ENCODE measurements at regions of chr1 and their contacts with region 1.

Region 1: GRCh38 chr1:58783993-58784757 is at the start of gene JUN:
- DNase-seq: peak; percentile 100
- ATAC-seq: peak; percentile 71
- H3K4me3 ChIP-seq: peak within 1 kb of the TSS; percentile 65 to 99 (median 98)
- H3K4me3 Mint-ChIP-seq: peak within 1 kb of the TSS; percentile 90
- H3K27ac ChIP-seq: peak within 1 kb of the TSS; percentile 100
- H3K27ac Mint-ChIP-seq: peak within 1 kb of the TSS; percentile 97
- H3K4me1 ChIP-seq: peaks cover 16 to 27% of the 10 kb centered on the region in 2 donors
- H3K4me1 Mint-ChIP-seq: peaks cover 39% of the 10 kb centered on the region
- H3K27me3 ChIP-seq: no peaks in the 10 kb centered on the region
- H3K27me3 Mint-ChIP-seq: no peaks in the 10 kb centered on the region
- CTCF ChIP-seq: no peak
- total RNA-seq, gene JUN: 94.4 and 95.3 TPM in 2 replicates

Region 2: GRCh38 chr1:58611861-58612385 is 172.3 kb before region 1 on chr1:
- CTCF ChIA-PET with region 1: no interaction called
- POLR2A ChIA-PET with region 1: no interaction called
- intact Hi-C with region 1: no loop called
- DNase-seq: no peak
- ATAC-seq: no peak
- H3K4me3 ChIP-seq: no peak overlapping the region
- H3K4me3 Mint-ChIP-seq: no peak overlapping the region
- H3K27ac ChIP-seq: no peak overlapping the region
- H3K27ac Mint-ChIP-seq: no peak overlapping the region
- H3K4me1 ChIP-seq: no peaks in the 10 kb centered on the region
- H3K4me1 Mint-ChIP-seq: no peaks in the 10 kb centered on the region
- H3K27me3 ChIP-seq: peaks cover 0 to 5% (median 0%) of the 10 kb centered on the region in 4 experiments
- H3K27me3 Mint-ChIP-seq: peaks cover 35% of the 10 kb centered on the region
- CTCF ChIP-seq: no peak

Region 3: GRCh38 chr1:58773406-58773840 is 10.8 kb before region 1 on chr1:
- CTCF ChIA-PET with region 1: interaction called, 18 read pairs
- POLR2A ChIA-PET with region 1: interaction called, 26 read pairs
- intact Hi-C with region 1: no loop called
- DNase-seq: peak; percentile 45
- ATAC-seq: peak; percentile 83
- H3K4me3 ChIP-seq: no peak overlapping the region
- H3K4me3 Mint-ChIP-seq: peak overlapping the region; percentile 30
- H3K27ac ChIP-seq: peak overlapping the region; percentile 26 to 32
- H3K27ac Mint-ChIP-seq: peak overlapping the region; percentile 69
- H3K4me1 ChIP-seq: peaks cover 18 to 20% of the 10 kb centered on the region in 2 donors
- H3K4me1 Mint-ChIP-seq: peaks cover 23% of the 10 kb centered on the region
- H3K27me3 ChIP-seq: peaks cover 0 to 5% (median 0%) of the 10 kb centered on the region in 4 experiments
- H3K27me3 Mint-ChIP-seq: peaks cover 8% of the 10 kb centered on the region
- CTCF ChIP-seq: no peak

Region 4: GRCh38 chr1:58841455-58841854 is 57.3 kb after region 1 on chr1:
- CTCF ChIA-PET with region 1: interaction called, 4 read pairs
- POLR2A ChIA-PET with region 1: no interaction called
- intact Hi-C with region 1: loop called (anchors 1 kb)
- DNase-seq: peak; percentile 44
- ATAC-seq: peak; percentile 51
- H3K4me3 ChIP-seq: no peak overlapping the region
- H3K4me3 Mint-ChIP-seq: no peak overlapping the region
- H3K27ac ChIP-seq: no peak overlapping the region
- H3K27ac Mint-ChIP-seq: no peak overlapping the region
- H3K4me1 ChIP-seq: no peaks in the 10 kb centered on the region
- H3K4me1 Mint-ChIP-seq: peaks cover 2% of the 10 kb centered on the region
- H3K27me3 ChIP-seq: no peaks in the 10 kb centered on the region
- H3K27me3 Mint-ChIP-seq: no peaks in the 10 kb centered on the region
- CTCF ChIP-seq: peak; percentile 27

Region 5: DNA sequence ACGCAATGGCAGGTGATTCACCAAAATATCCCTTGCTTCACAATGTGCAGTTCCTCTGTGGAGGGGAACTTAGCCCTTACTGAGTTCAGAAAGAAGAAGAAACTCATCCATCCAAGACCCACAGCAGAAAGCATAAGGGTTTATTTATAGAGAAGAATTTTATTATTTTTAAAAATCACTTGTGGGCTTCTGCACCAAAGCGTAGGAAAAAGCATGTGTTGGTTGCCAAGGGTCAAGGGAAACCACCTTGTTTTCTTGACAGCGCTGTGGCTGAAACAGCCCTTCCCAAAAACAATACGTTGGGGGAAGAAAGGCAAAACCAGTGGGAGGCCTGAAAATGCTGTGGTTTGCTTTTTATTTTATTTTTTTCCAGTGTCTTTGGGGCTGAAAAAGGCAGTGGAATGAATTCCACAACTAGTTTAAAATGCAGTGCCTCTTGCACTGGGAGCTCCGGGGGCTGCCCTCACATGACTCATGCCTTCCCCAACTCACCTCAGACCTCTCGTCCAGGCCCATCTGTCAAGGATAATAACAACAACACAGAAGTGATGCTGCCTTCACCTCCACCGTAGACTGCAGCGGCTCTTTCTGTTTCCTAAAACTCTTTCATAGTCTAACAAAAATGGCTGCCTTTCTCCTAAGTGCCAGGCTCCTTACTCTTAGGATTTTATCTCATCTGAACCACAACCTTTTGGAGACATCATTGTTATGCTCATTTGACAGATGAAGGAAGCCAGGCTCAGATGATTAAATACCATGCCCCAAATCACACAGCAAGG is 223.8 kb after region 1 on chr1:
- CTCF ChIA-PET with region 1: interaction called, 8 read pairs
- POLR2A ChIA-PET with region 1: interaction called, 5 read pairs
- intact Hi-C with region 1: loop called (anchors 1 kb)
- DNase-seq: peak; percentile 57
- ATAC-seq: peak; percentile 68
- H3K4me3 ChIP-seq: peak overlapping the region in 3 of 5 experiments; percentile 0 to 44 (median 6)
- H3K4me3 Mint-ChIP-seq: peak overlapping the region; percentile 55
- H3K27ac ChIP-seq: peak overlapping the region; percentile 70 to 85
- H3K27ac Mint-ChIP-seq: peak overlapping the region; percentile 90
- H3K4me1 ChIP-seq: peaks cover 62 to 70% of the 10 kb centered on the region in 2 donors
- H3K4me1 Mint-ChIP-seq: peaks cover 80% of the 10 kb centered on the region
- H3K27me3 ChIP-seq: no peaks in the 10 kb centered on the region
- H3K27me3 Mint-ChIP-seq: no peaks in the 10 kb centered on the region
- CTCF ChIP-seq: no peak

Region 6: GRCh38 chr1:59146651-59147358 is 362.6 kb after region 1 on chr1:
- CTCF ChIA-PET with region 1: interaction called, 6 read pairs
- POLR2A ChIA-PET with region 1: no interaction called
- intact Hi-C with region 1: loop called (anchors 2 kb)
- DNase-seq: peak; percentile 78
- ATAC-seq: peak; percentile 85
- H3K4me3 ChIP-seq: peak overlapping the region; percentile 31 to 69 (median 58)
- H3K4me3 Mint-ChIP-seq: peak overlapping the region; percentile 94
- H3K27ac ChIP-seq: peak overlapping the region; percentile 49 to 72
- H3K27ac Mint-ChIP-seq: peak overlapping the region; percentile 88
- H3K4me1 ChIP-seq: peaks cover 16 to 28% of the 10 kb centered on the region in 2 donors
- H3K4me1 Mint-ChIP-seq: peaks cover 32% of the 10 kb centered on the region
- H3K27me3 ChIP-seq: no peaks in the 10 kb centered on the region
- H3K27me3 Mint-ChIP-seq: no peaks in the 10 kb centered on the region
- CTCF ChIP-seq: peak; percentile 45

Region 7: DNA sequence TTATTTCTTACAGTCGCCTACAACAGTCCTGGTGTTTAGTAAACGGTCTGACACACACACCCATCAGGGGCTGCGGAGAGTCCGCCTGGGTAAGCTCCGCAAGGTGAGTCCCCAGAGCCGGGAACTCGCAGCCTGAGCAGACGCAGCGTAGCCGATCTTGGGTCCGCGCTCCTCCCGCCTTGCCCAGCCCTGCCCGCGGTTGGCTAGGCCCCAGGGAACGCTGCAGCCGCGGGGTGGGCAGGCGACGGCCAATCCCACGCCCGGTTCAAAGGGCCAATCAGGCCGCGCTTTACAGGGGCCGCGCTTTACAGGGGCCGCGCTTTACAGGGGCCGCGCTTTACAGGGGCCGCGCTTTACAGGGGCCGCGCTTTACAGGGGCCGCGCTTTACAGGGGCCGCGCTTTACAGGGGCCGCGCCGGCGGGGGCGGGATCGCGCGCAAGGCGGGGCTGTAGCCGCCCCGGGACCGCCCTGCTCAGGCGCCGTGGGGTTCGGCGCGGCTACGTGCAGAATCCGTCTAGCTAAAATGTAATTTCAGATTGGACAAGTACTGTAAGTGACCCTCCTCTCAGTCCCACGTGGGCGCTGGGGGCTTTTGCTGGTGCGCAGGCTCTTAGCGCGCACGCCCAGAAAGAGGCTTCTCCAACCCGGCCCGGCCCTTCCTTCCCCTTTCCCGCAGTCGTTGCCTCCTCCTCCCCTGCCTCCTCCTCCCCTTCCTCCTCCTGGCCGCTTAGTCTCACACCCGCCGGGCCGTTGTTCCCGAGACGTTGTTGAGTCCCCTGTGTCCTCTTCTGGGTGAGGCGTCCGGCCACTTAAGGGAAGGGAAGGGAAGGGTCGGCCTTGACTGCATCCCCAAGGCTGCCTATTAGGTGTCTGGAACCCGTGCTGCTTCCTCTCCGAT is 512.4 kb after region 1 on chr1 and contains the start of gene FGGY:
- CTCF ChIA-PET with region 1: interaction called, 6 read pairs
- POLR2A ChIA-PET with region 1: interaction called, 25 read pairs
- intact Hi-C with region 1: loop called (anchors 1 kb)
- DNase-seq: peak; percentile 97
- ATAC-seq: peak; percentile 89
- H3K4me3 ChIP-seq: peak within 1 kb of the TSS; percentile 63 to 92 (median 87)
- H3K4me3 Mint-ChIP-seq: peak within 1 kb of the TSS; percentile 91
- H3K27ac ChIP-seq: peak within 1 kb of the TSS; percentile 96 to 98
- H3K27ac Mint-ChIP-seq: peak within 1 kb of the TSS; percentile 98
- H3K4me1 ChIP-seq: peaks cover 22 to 25% of the 10 kb centered on the region in 2 donors
- H3K4me1 Mint-ChIP-seq: peaks cover 44% of the 10 kb centered on the region
- H3K27me3 ChIP-seq: no peaks in the 10 kb centered on the region
- H3K27me3 Mint-ChIP-seq: no peaks in the 10 kb centered on the region
- CTCF ChIP-seq: no peak
- total RNA-seq, gene FGGY: 34.0 and 38.5 TPM in 2 replicates